Activated CD8-positive, alpha-beta T cell treated with anti-CD3 and anti-CD28 coated beads, Interleukin-2, amount 10 ng/mL, durations not matched to agents 7 days and 5 days (primary cell): ENCODE measurements at regions of chr16 and their contacts with region 1.

Region 1: GRCh38 chr16:22353191-22353919 is 21.1 kb downstream of the CDR2 start:
- DNase-seq: no peak
- ATAC-seq: peak; percentile 34
- H3K4me3 Mint-ChIP-seq: no peak overlapping the region
- H3K27ac Mint-ChIP-seq: peak overlapping the region; percentile 75
- H3K4me1 Mint-ChIP-seq: peaks cover 49% of the 10 kb centered on the region
- H3K27me3 Mint-ChIP-seq: no peaks in the 10 kb centered on the region

Region 2: DNA sequence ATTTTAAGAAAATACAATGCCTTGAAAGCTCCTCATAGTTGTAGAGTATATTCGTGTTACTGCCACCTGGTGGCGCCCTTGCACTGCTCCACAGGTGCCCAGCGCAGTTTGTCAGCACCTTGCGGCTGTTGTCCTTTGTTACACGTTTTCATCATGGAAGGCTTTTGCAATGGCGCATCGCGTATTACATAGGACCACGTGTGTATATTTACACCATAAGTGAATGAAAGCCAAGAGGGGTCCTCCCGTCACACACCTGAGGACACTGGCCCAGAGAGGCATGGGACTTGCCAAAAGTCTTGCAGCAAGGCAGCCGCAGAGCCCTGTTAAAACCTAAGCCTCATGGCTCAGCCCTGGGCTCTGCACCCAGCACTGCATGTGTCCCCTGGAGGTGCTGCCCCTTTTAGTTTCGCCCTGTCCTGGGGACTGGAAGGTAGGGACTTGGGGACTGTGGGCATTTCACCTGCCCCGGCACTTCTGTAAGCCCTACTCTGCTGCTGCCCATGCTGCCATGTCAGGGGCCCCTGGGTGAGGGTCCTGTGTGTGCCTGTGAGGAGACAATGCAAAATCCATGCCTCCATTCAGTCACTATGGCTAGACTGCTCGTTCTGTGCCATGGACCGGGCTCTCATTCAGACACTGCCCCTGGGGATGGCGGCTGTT is 31.9 kb before region 1 on chr16:
- CTCF ChIA-PET with region 1: interaction called, 10 read pairs
- POLR2A ChIA-PET with region 1: interaction called, 3 read pairs
- DNase-seq: peak; percentile 82
- ATAC-seq: peak; percentile 75
- H3K4me3 Mint-ChIP-seq: no peak overlapping the region
- H3K27ac Mint-ChIP-seq: peak overlapping the region; percentile 20
- H3K4me1 Mint-ChIP-seq: no peaks in the 10 kb centered on the region
- H3K27me3 Mint-ChIP-seq: no peaks in the 10 kb centered on the region

Region 3: GRCh38 chr16:22369221-22369811 is 16.0 kb after region 1 on chr16:
- CTCF ChIA-PET with region 1: interaction called, 18 read pairs
- POLR2A ChIA-PET with region 1: interaction called, 158 read pairs
- DNase-seq: no peak
- ATAC-seq: no peak
- H3K4me3 Mint-ChIP-seq: peak overlapping the region; percentile 46
- H3K27ac Mint-ChIP-seq: peak overlapping the region; percentile 68
- H3K4me1 Mint-ChIP-seq: peaks cover 76% of the 10 kb centered on the region
- H3K27me3 Mint-ChIP-seq: no peaks in the 10 kb centered on the region

Region 4: GRCh38 chr16:22374311-22375116 is 21.2 kb after region 1 on chr16 and contains the start of gene CDR2:
- CTCF ChIA-PET with region 1: interaction called, 18 read pairs
- POLR2A ChIA-PET with region 1: interaction called, 158 read pairs
- DNase-seq: peak; percentile 99
- ATAC-seq: peak; percentile 95
- H3K4me3 Mint-ChIP-seq: peak within 1 kb of the TSS; percentile 97
- H3K27ac Mint-ChIP-seq: peak within 1 kb of the TSS; percentile 91
- H3K4me1 Mint-ChIP-seq: peaks cover 51% of the 10 kb centered on the region
- H3K27me3 Mint-ChIP-seq: no peaks in the 10 kb centered on the region
- total RNA-seq, gene CDR2: 39.1 to 44.6 TPM

Region 5: GRCh38 chr16:22397464-22397863 is 44.1 kb after region 1 on chr16:
- CTCF ChIA-PET with region 1: no interaction called
- POLR2A ChIA-PET with region 1: no interaction called
- DNase-seq: no peak
- ATAC-seq: no peak
- H3K4me3 Mint-ChIP-seq: no peak overlapping the region
- H3K27ac Mint-ChIP-seq: no peak overlapping the region
- H3K4me1 Mint-ChIP-seq: no peaks in the 10 kb centered on the region
- H3K27me3 Mint-ChIP-seq: no peaks in the 10 kb centered on the region